Right lobe of liver (tissue), 6 donors: ENCODE measurements at regions of chr7 and their contacts with region 1.

Region 1: DNA sequence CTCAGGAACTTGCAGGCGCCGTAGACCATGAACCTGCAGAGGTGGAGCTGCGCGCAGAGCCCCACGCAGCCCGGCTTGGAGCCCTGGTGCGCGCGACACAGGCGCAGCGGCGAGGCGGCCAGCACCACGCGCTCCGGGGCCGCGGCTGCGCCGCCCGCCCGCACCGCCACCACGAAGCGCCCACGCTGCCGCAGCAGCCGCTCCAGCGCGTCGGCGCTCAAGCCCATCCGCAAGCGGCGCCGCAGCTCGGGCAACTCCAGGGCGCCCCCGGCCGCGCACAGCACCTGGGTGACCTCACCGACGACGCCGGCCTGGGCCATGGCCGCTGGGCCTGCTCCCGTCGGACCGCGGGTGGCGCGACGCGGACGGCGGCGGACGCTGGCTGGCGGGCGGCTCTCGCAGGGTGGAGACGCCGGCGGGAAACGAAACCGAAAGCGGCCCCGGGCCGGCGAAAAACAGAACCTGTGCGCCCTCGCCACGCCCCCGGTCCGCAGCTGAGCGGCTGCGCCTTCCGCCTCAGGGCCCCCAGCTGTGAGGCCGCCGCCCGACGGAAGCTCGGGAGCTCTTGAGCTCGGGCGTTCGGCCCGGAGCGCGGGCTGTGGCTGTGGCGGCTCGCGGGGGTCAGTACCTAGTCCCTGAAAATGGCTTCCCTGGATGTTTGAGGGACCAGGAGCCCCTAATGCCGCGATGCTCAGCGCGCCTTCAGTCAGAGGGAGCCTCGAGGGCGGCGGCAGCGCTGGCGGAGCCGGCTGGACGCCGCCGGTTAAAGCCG is at the start of gene PARP12:
- DNase-seq: peak; percentile 95 to 97 (median 96)
- ATAC-seq: peak; percentile 80 to 94 (median 92)
- H3K4me3 ChIP-seq: peak within 1 kb of the TSS; percentile 63 to 80 (median 76)
- H3K27ac ChIP-seq: peak within 1 kb of the TSS; percentile 80 to 92 (median 83)
- H3K4me1 ChIP-seq: peaks cover 0 to 30% (median 13%) of the 10 kb centered on the region in 4 donors
- H3K27me3 ChIP-seq: no peaks in the 10 kb centered on the region
- CTCF ChIP-seq: no peak
- POLR2A ChIP-seq: peak; percentile 69
- total RNA-seq, gene PARP12: 15.7 to 33.1 (median 23.3) TPM

Region 2: DNA sequence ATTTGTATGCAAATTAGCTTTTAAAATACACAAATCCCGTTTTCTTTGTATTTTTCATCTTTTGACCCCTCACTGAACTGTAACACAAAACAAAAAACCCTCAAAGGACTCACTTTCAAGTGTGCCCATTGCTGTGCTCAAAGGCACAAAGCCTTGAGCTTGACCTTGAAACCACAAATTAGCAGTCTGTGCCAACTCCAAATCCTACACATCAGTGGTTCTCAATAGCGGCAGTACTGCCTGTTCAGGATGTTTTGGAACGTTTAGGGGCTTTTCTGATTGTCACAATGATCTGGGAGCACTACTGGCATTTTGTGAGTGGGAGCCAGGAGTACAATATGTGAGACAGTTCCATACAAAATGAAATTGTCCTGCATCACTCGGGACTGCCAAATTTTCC is 58.6 kb after region 1 on chr7:
- intact Hi-C with region 1: no loop called
- DNase-seq: no peak
- ATAC-seq: no peak
- H3K4me3 ChIP-seq: no peak overlapping the region
- H3K27ac ChIP-seq: no peak overlapping the region
- H3K4me1 ChIP-seq: no peaks in the 10 kb centered on the region
- H3K27me3 ChIP-seq: no peaks in the 10 kb centered on the region
- CTCF ChIP-seq: no peak
- POLR2A ChIP-seq: no peak

Region 3: GRCh38 chr7:140175221-140176121 is 112.8 kb after region 1 on chr7:
- intact Hi-C with region 1: loop called in 1 of 2 experiments (anchors 10 kb)
- DNase-seq: peak; percentile 92 to 95 (median 94)
- ATAC-seq: peak; percentile 66 to 71 (median 71)
- H3K4me3 ChIP-seq: peak overlapping the region; percentile 74 to 90 (median 85)
- H3K27ac ChIP-seq: peak overlapping the region; percentile 95 to 99 (median 97)
- H3K4me1 ChIP-seq: peaks cover 0 to 39% (median 8%) of the 10 kb centered on the region in 4 donors
- H3K27me3 ChIP-seq: no peaks in the 10 kb centered on the region
- CTCF ChIP-seq: peak; percentile 63 to 77 (median 70)
- POLR2A ChIP-seq: peak; percentile 99